CD4-positive, alpha-beta T cell (primary cell): ENCODE measurements at regions of chr2 and their contacts with region 1.

Region 1: GRCh38 chr2:25878361-25879132 is at the start of gene ASXL2:
- DNase-seq: peak; percentile 93 to 100 (median 97)
- ATAC-seq: peak; percentile 86
- H3K4me3 ChIP-seq: peak within 1 kb of the TSS; percentile 99
- H3K4me3 Mint-ChIP-seq: peak within 1 kb of the TSS; percentile 93
- H3K27ac ChIP-seq: peak within 1 kb of the TSS; percentile 98 to 99
- H3K27ac Mint-ChIP-seq: peak within 1 kb of the TSS; percentile 93
- H3K4me1 ChIP-seq: peaks cover 15% of the 10 kb centered on the region
- H3K4me1 Mint-ChIP-seq: peaks cover 44% of the 10 kb centered on the region
- H3K27me3 ChIP-seq: no peaks in the 10 kb centered on the region
- H3K27me3 Mint-ChIP-seq: no peaks in the 10 kb centered on the region
- CTCF ChIP-seq: no peak
- total RNA-seq, gene ASXL2: 15.1 to 17.2 TPM

Region 2: GRCh38 chr2:24490674-24491625 is 1387.6 kb before region 1 on chr2 and contains the start of gene NCOA1:
- CTCF ChIA-PET with region 1: no interaction called
- POLR2A ChIA-PET with region 1: no interaction called
- intact Hi-C with region 1: loop called in 1 of 2 experiments (anchors 10 kb)
- DNase-seq: peak; percentile 83 to 95 (median 88)
- ATAC-seq: peak; percentile 85
- H3K4me3 ChIP-seq: peak within 1 kb of the TSS; percentile 60
- H3K4me3 Mint-ChIP-seq: peak within 1 kb of the TSS; percentile 92
- H3K27ac ChIP-seq: peak within 1 kb of the TSS; percentile 76 to 81
- H3K27ac Mint-ChIP-seq: peak within 1 kb of the TSS; percentile 94
- H3K4me1 ChIP-seq: peaks cover 34% of the 10 kb centered on the region
- H3K4me1 Mint-ChIP-seq: peaks cover 66% of the 10 kb centered on the region
- H3K27me3 ChIP-seq: no peaks in the 10 kb centered on the region
- H3K27me3 Mint-ChIP-seq: no peaks in the 10 kb centered on the region
- CTCF ChIP-seq: no peak
- total RNA-seq, gene NCOA1: 35.5 to 40.6 TPM

Region 3: GRCh38 chr2:25673300-25674076 is 205.1 kb before region 1 on chr2 and contains the start of gene DTNB:
- CTCF ChIA-PET with region 1: interaction called, 3 read pairs
- POLR2A ChIA-PET with region 1: interaction called, 17 read pairs
- intact Hi-C with region 1: loop called in 1 of 2 experiments (anchors 1 kb)
- DNase-seq: peak; percentile 58 to 92 (median 76)
- ATAC-seq: peak; percentile 75
- H3K4me3 ChIP-seq: peak within 1 kb of the TSS; percentile 84
- H3K4me3 Mint-ChIP-seq: peak within 1 kb of the TSS; percentile 91
- H3K27ac ChIP-seq: peak within 1 kb of the TSS; percentile 43 to 66
- H3K27ac Mint-ChIP-seq: peak within 1 kb of the TSS; percentile 85
- H3K4me1 ChIP-seq: peaks cover 23% of the 10 kb centered on the region
- H3K4me1 Mint-ChIP-seq: peaks cover 35% of the 10 kb centered on the region
- H3K27me3 ChIP-seq: peaks cover 0 to 2% of the 10 kb centered on the region in 2 experiments
- H3K27me3 Mint-ChIP-seq: no peaks in the 10 kb centered on the region
- CTCF ChIP-seq: no peak
- total RNA-seq, gene DTNB: 30.1 to 33.6 TPM

Region 4: DNA sequence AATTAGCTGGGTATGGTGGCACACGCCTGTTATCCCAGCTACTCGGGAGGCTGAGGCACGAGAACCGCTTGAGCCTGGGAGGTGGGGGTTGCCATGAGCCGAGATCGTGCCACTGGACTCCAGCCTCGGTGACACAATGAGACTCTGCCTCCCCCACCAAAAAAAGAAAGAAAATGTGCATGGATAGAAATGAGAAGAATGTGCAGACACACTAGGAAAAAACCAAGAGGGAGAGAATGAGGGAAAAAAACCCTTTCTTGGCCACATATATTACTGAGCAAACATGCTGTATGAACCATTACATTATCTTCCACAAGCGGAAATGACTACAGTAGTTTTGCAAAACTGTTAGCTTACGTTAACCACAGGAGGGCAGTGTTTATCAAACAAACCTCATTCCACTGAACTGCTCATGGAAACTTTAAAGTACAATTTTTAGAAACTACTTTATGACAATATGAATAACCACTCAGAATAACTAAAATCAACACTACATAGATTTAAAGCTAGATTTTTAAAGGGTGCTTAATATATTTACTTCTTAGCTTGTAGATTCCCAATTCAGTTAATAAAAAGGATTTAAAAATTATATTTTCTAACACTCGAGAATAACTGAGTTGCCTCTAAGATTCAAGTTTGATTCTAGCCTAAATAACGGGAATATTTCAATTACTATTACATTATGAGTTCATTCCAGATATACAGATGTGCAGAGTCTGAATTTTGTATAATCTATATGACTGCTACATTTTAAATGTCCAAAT is 26.6 kb before region 1 on chr2:
- CTCF ChIA-PET with region 1: interaction called, 12 read pairs
- POLR2A ChIA-PET with region 1: interaction called, 37 read pairs
- intact Hi-C with region 1: loop called in 1 of 2 experiments (anchors 2 kb)
- DNase-seq: peak in 5 of 14 experiments; percentile 10 to 84 (median 83)
- ATAC-seq: peak; percentile 96
- H3K4me3 ChIP-seq: peak overlapping the region; percentile 19
- H3K4me3 Mint-ChIP-seq: peak overlapping the region; percentile 68
- H3K27ac ChIP-seq: no peak overlapping the region
- H3K27ac Mint-ChIP-seq: peak overlapping the region; percentile 35
- H3K4me1 ChIP-seq: peaks cover 20% of the 10 kb centered on the region
- H3K4me1 Mint-ChIP-seq: peaks cover 49% of the 10 kb centered on the region
- H3K27me3 ChIP-seq: no peaks in the 10 kb centered on the region
- H3K27me3 Mint-ChIP-seq: no peaks in the 10 kb centered on the region
- CTCF ChIP-seq: peak; percentile 70

Region 5: DNA sequence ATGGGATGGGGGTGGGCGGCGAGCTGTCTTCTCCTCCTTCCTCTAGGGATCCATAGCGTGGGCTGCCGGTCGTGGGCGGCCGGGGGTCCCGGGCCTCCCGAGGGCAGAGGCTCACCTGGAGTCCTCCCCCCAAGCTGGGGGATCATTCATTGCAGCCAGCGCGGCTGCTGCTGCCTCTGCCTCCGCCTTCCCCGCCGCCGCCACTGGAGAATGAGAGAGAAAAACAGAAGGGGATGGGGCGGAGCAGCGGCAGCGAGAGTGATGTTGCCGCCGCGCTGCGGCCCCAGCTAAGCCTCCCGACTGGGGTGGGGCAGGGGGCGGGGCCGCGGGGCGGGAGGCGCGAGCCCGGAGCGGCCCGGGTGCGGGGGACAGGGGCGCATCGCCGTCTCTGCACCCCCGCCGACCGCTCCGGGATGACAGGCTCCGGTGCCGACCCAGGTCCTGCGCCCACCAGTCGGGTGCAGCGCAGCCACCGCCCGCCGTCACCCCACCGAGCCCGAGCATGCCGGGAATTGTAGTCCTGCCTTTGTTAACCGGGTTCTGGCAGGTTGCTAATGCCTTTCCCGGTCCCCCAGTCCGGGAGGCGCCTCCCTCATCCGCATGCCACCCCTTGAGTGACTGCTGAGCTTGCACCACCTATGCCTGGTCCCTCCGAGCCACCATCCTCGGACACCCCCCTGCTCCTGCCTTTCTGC is 103.9 kb after region 1 on chr2 and contains the start of gene KIF3C:
- CTCF ChIA-PET with region 1: no interaction called
- POLR2A ChIA-PET with region 1: interaction called, 5 read pairs
- intact Hi-C with region 1: loop called in 1 of 2 experiments (anchors 2 kb)
- DNase-seq: peak; percentile 56 to 85 (median 72)
- ATAC-seq: peak; percentile 95
- H3K4me3 ChIP-seq: peak within 1 kb of the TSS; percentile 88
- H3K4me3 Mint-ChIP-seq: peak within 1 kb of the TSS; percentile 92
- H3K27ac ChIP-seq: no peak within 1 kb of the TSS
- H3K27ac Mint-ChIP-seq: peak within 1 kb of the TSS; percentile 67
- H3K4me1 ChIP-seq: peaks cover 24% of the 10 kb centered on the region
- H3K4me1 Mint-ChIP-seq: peaks cover 18% of the 10 kb centered on the region
- H3K27me3 ChIP-seq: no peaks in the 10 kb centered on the region
- H3K27me3 Mint-ChIP-seq: no peaks in the 10 kb centered on the region
- CTCF ChIP-seq: no peak
- total RNA-seq, gene KIF3C: 1.8 to 3.4 TPM

Region 6: DNA sequence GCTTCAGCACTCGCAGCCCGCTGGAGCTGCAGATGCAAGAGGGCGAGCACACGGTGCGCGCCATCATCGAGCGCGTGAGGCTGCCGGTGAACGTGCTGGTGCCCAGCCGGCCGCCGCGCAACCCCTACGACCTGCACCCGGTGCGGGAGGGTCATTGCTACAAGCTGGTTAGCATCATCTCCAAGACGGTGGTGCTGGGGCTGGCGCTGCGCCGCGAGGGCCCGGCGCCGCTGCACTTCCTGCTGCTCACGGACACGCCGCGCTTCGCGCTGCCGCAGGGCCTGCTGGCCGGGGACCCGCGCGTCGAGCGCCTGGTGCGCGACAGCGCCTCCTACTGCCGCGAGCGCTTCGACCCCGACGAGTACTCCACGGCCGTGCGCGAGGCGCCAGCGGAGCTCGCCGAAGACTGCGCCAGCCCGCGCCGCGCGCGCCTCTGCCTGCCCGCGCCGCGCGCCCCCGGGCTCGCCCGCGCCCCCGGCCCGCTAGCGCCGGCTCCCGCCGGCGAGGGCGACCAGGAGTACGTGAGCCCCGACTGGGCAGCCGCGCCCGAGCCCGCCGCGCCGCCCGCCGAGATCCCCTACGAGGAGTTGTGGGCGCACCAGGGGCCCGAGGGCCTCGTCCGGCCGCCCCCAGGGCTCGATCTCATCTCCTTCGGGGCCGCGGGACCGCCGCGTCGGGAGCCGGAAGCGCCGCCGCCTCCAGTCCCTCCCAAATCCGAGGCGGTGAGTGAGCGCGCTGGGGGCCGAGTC is 306.2 kb after region 1 on chr2:
- CTCF ChIA-PET with region 1: interaction called, 5 read pairs
- POLR2A ChIA-PET with region 1: interaction called, 16 read pairs
- intact Hi-C with region 1: loop called in 1 of 2 experiments (anchors 5 kb)
- DNase-seq: peak; percentile 81 to 96 (median 86)
- ATAC-seq: peak; percentile 99
- H3K4me3 ChIP-seq: peak overlapping the region; percentile 60
- H3K4me3 Mint-ChIP-seq: peak overlapping the region; percentile 89
- H3K27ac ChIP-seq: peak overlapping the region in 1 of 2 donors; percentile 24
- H3K27ac Mint-ChIP-seq: peak overlapping the region; percentile 71
- H3K4me1 ChIP-seq: peaks cover 26% of the 10 kb centered on the region
- H3K4me1 Mint-ChIP-seq: peaks cover 21% of the 10 kb centered on the region
- H3K27me3 ChIP-seq: peaks cover 0 to 4% of the 10 kb centered on the region in 2 experiments
- H3K27me3 Mint-ChIP-seq: peaks cover 13% of the 10 kb centered on the region
- CTCF ChIP-seq: peak; percentile 59

Region 7: GRCh38 chr2:26345545-26346453 is 467.3 kb after region 1 on chr2 and contains the start of gene SELENOI:
- CTCF ChIA-PET with region 1: no interaction called
- POLR2A ChIA-PET with region 1: interaction called, 4 read pairs
- intact Hi-C with region 1: loop called (anchors 5 kb)
- DNase-seq: peak; percentile 98 to 100 (median 99)
- ATAC-seq: peak; percentile 93
- H3K4me3 ChIP-seq: peak within 1 kb of the TSS; percentile 96
- H3K4me3 Mint-ChIP-seq: peak within 1 kb of the TSS; percentile 97
- H3K27ac ChIP-seq: peak within 1 kb of the TSS; percentile 92 to 96
- H3K27ac Mint-ChIP-seq: peak within 1 kb of the TSS; percentile 97
- H3K4me1 ChIP-seq: peaks cover 20% of the 10 kb centered on the region
- H3K4me1 Mint-ChIP-seq: peaks cover 43% of the 10 kb centered on the region
- H3K27me3 ChIP-seq: no peaks in the 10 kb centered on the region
- H3K27me3 Mint-ChIP-seq: no peaks in the 10 kb centered on the region
- CTCF ChIP-seq: no peak
- total RNA-seq, gene SELENOI: 27.7 to 31.5 TPM

Region 8: DNA sequence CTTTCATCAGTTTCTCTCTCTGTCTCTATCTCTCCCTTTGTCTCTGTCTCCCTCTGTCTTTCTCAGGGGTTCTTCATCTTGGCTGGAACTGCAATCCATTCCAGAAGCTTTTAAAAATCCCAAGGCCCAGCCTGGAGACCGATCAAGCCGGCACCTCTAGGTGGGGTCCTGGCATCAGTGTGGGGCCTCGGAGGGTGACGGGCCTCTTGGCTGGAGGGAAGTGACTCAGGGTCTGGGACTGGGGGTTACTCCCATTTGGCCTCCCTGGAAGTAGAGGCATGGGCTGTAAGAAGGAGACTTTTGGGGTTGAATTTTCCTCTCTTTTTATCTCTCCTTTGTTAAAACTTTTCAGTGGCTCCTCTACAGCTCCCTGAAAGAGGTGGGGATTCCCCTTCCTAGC is 652.1 kb after region 1 on chr2:
- CTCF ChIA-PET with region 1: no interaction called
- POLR2A ChIA-PET with region 1: no interaction called
- intact Hi-C with region 1: no loop called
- DNase-seq: no peak
- ATAC-seq: no peak
- H3K4me3 ChIP-seq: no peak overlapping the region
- H3K4me3 Mint-ChIP-seq: no peak overlapping the region
- H3K27ac ChIP-seq: no peak overlapping the region
- H3K27ac Mint-ChIP-seq: no peak overlapping the region
- H3K4me1 ChIP-seq: no peaks in the 10 kb centered on the region
- H3K4me1 Mint-ChIP-seq: no peaks in the 10 kb centered on the region
- H3K27me3 ChIP-seq: no peaks in the 10 kb centered on the region
- H3K27me3 Mint-ChIP-seq: no peaks in the 10 kb centered on the region
- CTCF ChIP-seq: no peak